CD8-positive, alpha-beta memory T cell (primary cell): ENCODE measurements at regions of chr7 and their contacts with region 1.

Region 1: GRCh38 chr7:139016931-139017511 is 18.8 kb downstream of the ZC3HAV1L start:
- DNase-seq: peak; percentile 35 to 73 (median 51)
- H3K4me3 ChIP-seq: no peak overlapping the region
- H3K4me3 Mint-ChIP-seq: peak overlapping the region in 1 of 7 donors; percentile 2
- H3K27ac ChIP-seq: no peak overlapping the region
- H3K27ac Mint-ChIP-seq: peak overlapping the region in 1 of 8 donors; percentile 58
- H3K4me1 ChIP-seq: no peaks in the 10 kb centered on the region
- H3K4me1 Mint-ChIP-seq: peaks cover 6 to 7% (median 6%) of the 10 kb centered on the region in 3 donors
- H3K27me3 ChIP-seq: no peaks in the 10 kb centered on the region
- H3K27me3 Mint-ChIP-seq: peaks cover 5 to 28% of the 10 kb centered on the region in 2 donors

Region 2: GRCh38 chr7:139004321-139005075 is 12.5 kb before region 1 on chr7:
- CTCF ChIA-PET with region 1: interaction called, 10 read pairs
- POLR2A ChIA-PET with region 1: no interaction called
- DNase-seq: no peak
- H3K4me3 ChIP-seq: no peak overlapping the region
- H3K4me3 Mint-ChIP-seq: no peak overlapping the region
- H3K27ac ChIP-seq: no peak overlapping the region
- H3K27ac Mint-ChIP-seq: peak overlapping the region in 1 of 8 donors; percentile 9
- H3K4me1 ChIP-seq: no peaks in the 10 kb centered on the region
- H3K4me1 Mint-ChIP-seq: no peaks in the 10 kb centered on the region
- H3K27me3 ChIP-seq: no peaks in the 10 kb centered on the region
- H3K27me3 Mint-ChIP-seq: peaks cover 0 to under 1% of the 10 kb centered on the region in 2 donors

Region 3: GRCh38 chr7:139043823-139044812 is 27.1 kb after region 1 on chr7:
- CTCF ChIA-PET with region 1: interaction called, 26 read pairs
- POLR2A ChIA-PET with region 1: interaction called, 3 read pairs
- DNase-seq: peak; percentile 28 to 87 (median 69)
- H3K4me3 ChIP-seq: peak overlapping the region; percentile 13
- H3K4me3 Mint-ChIP-seq: peak overlapping the region; percentile 1 to 68 (median 58)
- H3K27ac ChIP-seq: peak overlapping the region; percentile 57
- H3K27ac Mint-ChIP-seq: peak overlapping the region; percentile 63 to 97 (median 84)
- H3K4me1 ChIP-seq: peaks cover 46% of the 10 kb centered on the region
- H3K4me1 Mint-ChIP-seq: peaks cover 59 to 74% (median 70%) of the 10 kb centered on the region in 3 donors
- H3K27me3 ChIP-seq: no peaks in the 10 kb centered on the region
- H3K27me3 Mint-ChIP-seq: peaks cover 0 to 1% of the 10 kb centered on the region in 2 donors

Region 4: DNA sequence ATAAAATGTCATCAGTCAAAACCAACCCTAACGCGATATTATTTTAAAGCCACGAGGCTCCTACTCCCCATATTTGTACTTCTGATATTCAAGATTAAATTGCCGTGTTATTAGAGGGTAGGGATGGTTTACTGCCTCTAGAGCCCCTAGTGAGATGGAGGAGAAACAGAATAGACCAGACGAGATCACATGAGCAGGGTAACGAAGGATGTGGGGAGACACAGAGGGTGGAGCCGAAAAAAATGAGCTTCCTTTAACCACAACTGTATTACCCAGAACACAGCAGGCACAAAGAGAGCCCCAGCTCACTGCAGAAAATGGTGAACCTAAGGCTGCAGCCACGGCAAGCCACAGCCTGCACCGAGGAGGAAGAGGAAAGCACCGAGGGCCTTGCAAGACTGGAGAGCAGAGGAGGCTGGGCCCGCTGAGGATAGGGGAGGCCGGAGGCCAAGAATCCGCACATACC is 78.2 kb after region 1 on chr7:
- CTCF ChIA-PET with region 1: interaction called, 10 read pairs
- POLR2A ChIA-PET with region 1: no interaction called
- DNase-seq: peak; percentile 65 to 95 (median 91)
- H3K4me3 ChIP-seq: peak overlapping the region; percentile 74
- H3K4me3 Mint-ChIP-seq: peak overlapping the region; percentile 77 to 92 (median 86)
- H3K27ac ChIP-seq: peak overlapping the region; percentile 40
- H3K27ac Mint-ChIP-seq: peak overlapping the region; percentile 74 to 99 (median 94)
- H3K4me1 ChIP-seq: peaks cover 82% of the 10 kb centered on the region
- H3K4me1 Mint-ChIP-seq: peaks cover 87 to 98% (median 97%) of the 10 kb centered on the region in 3 donors
- H3K27me3 ChIP-seq: no peaks in the 10 kb centered on the region
- H3K27me3 Mint-ChIP-seq: no peaks in the 10 kb centered on the region

Region 5: DNA sequence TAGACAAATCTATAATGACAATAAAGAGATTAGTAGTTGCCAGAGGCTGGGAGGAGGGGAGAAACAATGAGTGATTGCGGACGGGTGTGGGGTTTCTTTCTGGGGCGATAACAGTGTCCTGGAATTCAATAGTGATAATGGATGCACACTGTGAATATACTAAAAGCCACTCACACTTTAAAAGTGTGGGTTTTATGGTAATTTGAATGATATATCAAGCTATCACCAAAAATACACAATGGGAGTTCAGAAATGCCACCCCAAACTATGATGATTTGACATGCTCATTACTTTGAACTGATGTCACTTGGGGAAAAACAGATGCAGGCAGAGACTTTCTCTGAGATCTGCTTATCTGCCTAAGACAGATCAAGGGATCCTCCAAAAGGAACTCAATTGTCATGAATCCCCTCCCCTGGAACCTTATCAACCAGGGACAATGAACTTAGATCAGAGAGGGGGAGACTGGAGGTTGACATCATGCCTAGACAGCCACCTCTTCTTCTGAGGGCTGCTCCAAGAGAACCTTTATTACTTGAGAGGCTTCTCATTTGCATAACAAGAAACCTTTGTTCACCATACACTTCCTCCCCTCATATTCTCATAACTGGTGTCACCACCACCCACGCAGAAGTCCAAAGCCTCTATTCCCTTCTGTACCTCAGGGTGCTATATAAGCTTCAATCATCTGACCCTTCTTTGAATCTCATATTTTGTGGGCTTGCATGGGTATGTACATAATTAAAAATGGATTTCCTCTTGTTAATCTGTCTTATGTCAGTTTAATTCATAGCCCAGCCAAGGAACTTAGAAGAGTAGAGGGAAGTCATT is 107.3 kb after region 1 on chr7:
- CTCF ChIA-PET with region 1: interaction called, 54 read pairs
- POLR2A ChIA-PET with region 1: interaction called, 4 read pairs
- DNase-seq: no peak
- H3K4me3 ChIP-seq: no peak overlapping the region
- H3K4me3 Mint-ChIP-seq: no peak overlapping the region
- H3K27ac ChIP-seq: peak overlapping the region; percentile 41
- H3K27ac Mint-ChIP-seq: no peak overlapping the region
- H3K4me1 ChIP-seq: peaks cover 13% of the 10 kb centered on the region
- H3K4me1 Mint-ChIP-seq: peaks cover 5 to 12% (median 9%) of the 10 kb centered on the region in 3 donors
- H3K27me3 ChIP-seq: no peaks in the 10 kb centered on the region
- H3K27me3 Mint-ChIP-seq: peaks cover 4% of the 10 kb centered on the region in 2 donors